ENCODE measurements at regions of chr3 and their contacts with region 1.

Region 1: GRCh38 chr3:136196401-136197158 is 445 bp upstream of the MSL2 start:
- DNase-seq: peak; percentile 99
- H3K4me3 ChIP-seq: peak overlapping the region; percentile 77
- H3K27ac ChIP-seq: peak overlapping the region; percentile 100
- H3K4me1 ChIP-seq: peaks cover 51% of the 10 kb centered on the region
- H3K27me3 ChIP-seq: no peaks in the 10 kb centered on the region
- CTCF ChIP-seq: no peak

Region 2: GRCh38 chr3:136249593-136250225 is 53.1 kb after region 1 on chr3:
- intact Hi-C with region 1: loop called (anchors 10 kb)
- DNase-seq: no peak
- H3K4me3 ChIP-seq: peak overlapping the region; percentile 84
- H3K27ac ChIP-seq: peak overlapping the region; percentile 98
- H3K4me1 ChIP-seq: peaks cover 28% of the 10 kb centered on the region
- H3K27me3 ChIP-seq: no peaks in the 10 kb centered on the region
- CTCF ChIP-seq: no peak

Region 3: GRCh38 chr3:136353461-136353860 is 156.9 kb after region 1 on chr3:
- intact Hi-C with region 1: no loop called
- DNase-seq: no peak
- H3K4me3 ChIP-seq: no peak overlapping the region
- H3K27ac ChIP-seq: no peak overlapping the region
- H3K4me1 ChIP-seq: peaks cover 22% of the 10 kb centered on the region
- H3K27me3 ChIP-seq: no peaks in the 10 kb centered on the region
- CTCF ChIP-seq: no peak